AG04449 (cell line): ENCODE measurements at regions of chr16 and their contacts with region 1.

Region 1: GRCh38 chr16:69930117-69930776 is 20.9 kb upstream of the CLEC18A start:
- DNase-seq: no peak
- H3K4me3 ChIP-seq: no peak overlapping the region
- CTCF ChIP-seq: peak; percentile 71

Region 2: DNA sequence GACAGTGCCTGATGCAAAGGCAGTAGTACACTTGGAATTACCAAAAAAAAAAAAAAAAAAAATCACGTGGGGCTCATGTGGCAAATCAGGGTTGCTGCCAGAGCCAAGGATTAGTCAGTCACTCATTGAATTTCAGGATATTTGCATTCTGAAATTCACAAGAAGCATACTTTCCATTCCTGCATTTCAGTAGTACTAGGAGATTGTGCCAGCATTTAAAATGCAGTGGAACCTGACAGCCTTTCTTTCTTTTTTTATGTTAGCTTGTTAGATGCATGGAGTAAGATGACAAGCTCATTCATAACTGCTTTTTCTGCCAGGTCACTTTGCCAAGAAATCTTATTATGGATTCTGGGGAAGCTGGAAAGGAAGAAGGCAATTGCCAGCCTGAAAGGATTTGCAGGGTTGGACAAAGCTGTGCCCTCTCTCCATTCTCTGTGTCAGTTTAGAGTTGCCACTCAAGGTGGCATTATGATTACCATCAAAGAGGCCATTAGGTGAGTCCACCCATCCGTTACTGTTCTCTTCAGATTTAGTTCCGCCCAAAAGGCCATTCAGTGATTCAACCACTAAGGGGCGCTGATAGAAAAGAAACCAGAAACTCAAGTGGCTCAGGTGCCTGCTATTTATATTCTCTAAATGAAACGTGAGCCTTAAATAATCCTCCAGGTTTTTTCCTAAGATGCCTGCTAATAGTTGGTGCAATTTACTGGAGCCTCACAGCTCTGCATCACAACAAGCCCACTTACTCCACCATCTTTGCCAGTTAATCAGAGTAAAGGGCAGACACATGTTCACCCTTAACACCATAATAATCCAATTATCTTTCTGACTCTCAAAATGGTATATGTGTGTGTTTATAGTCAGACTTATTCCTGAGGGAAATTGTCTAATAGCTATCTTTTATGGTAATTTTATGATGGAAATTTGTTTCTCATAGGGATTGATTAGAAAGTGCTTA is 1028.0 kb before region 1 on chr16:
- CTCF ChIA-PET with region 1: no interaction called
- POLR2A ChIA-PET with region 1: no interaction called
- DNase-seq: peak; percentile 46
- H3K4me3 ChIP-seq: no peak overlapping the region
- CTCF ChIP-seq: peak; percentile 53

Region 3: GRCh38 chr16:69812688-69813014 is 117.6 kb before region 1 on chr16:
- CTCF ChIA-PET with region 1: interaction called, 30 read pairs
- POLR2A ChIA-PET with region 1: no interaction called
- DNase-seq: no peak
- H3K4me3 ChIP-seq: no peak overlapping the region
- CTCF ChIP-seq: no peak

Region 4: GRCh38 chr16:69880640-69881133 is 49.6 kb before region 1 on chr16:
- CTCF ChIA-PET with region 1: interaction called, 11 read pairs
- POLR2A ChIA-PET with region 1: no interaction called
- DNase-seq: no peak
- H3K4me3 ChIP-seq: no peak overlapping the region
- CTCF ChIP-seq: no peak

Region 5: DNA sequence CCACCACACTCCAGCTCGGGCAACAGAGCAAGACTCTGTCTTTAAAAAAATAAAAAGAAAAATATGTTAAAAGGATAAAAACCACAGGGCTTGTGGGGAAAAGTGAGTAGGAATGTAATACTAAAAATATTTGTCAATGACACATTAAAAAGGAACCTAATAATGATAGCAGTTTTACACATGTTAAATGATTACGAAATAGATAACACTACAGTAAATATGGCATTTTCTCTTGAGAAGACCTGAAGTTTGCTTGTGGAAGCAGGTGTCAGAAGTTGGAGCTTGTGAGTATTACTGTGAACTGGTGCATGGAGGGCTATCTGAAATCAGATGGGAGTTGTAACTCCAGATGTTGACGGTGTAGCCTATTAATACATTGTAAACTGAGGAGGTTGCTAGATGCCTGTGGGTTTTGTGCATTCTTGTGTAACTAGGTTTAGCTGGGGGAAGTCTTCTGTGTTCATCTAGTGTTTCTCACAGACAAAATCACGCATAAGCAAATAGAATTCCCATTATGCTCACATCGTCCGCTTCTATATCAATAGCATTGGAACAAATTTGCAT is 23.3 kb before region 1 on chr16:
- CTCF ChIA-PET with region 1: interaction called, 50 read pairs
- POLR2A ChIA-PET with region 1: no interaction called
- DNase-seq: peak; percentile 59
- H3K4me3 ChIP-seq: no peak overlapping the region
- CTCF ChIP-seq: no peak